Caco-2 (cell line): ENCODE measurements at regions of chr15 and their contacts with region 1.

Region 1: DNA sequence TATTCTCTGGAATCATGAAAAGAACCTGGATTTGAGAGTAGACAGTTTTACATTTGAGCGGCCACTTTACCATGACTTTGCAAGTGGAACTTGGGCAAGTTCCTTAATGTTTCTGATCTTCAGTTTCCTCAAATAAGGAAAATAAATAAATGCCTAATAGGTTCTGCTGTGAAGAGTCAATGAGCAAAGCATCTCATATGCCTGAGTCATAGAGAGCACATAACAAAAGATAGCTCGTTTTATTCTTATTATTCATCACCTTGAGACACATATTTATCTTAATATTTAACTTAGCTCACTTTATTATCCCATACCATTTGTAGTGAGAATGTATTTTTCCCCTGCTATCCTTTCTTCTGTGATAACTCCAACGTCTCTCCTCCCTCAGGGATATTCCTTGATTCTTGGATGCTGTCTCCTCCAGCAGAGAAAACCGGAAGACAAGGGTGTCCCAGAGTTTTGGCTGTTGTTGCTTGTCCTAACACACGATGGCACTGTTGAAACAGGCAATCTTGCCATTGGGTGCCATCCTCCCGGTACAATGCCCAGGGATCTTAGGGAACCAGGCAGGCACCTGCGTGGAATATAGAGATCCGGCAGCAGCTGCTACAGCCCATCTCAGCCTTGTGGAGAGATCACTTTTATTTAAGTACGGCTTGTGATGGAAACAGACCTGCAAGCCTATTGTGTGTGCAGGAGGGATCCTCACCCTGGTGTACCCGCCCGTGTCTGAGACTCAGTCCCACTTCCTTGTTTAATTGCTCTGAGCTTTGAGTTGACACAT is 33.3 kb upstream of the VPS33B start:
- DNase-seq: peak; percentile 62 to 63
- H3K4me3 ChIP-seq: no peak overlapping the region
- H3K4me3 Mint-ChIP-seq: no peak overlapping the region
- H3K27ac Mint-ChIP-seq: no peak overlapping the region
- H3K4me1 ChIP-seq: no peaks in the 10 kb centered on the region
- H3K4me1 Mint-ChIP-seq: no peaks in the 10 kb centered on the region
- H3K27me3 ChIP-seq: no peaks in the 10 kb centered on the region
- H3K27me3 Mint-ChIP-seq: peaks cover 36% of the 10 kb centered on the region
- CTCF ChIP-seq: peak; percentile 63 to 66

Region 2: DNA sequence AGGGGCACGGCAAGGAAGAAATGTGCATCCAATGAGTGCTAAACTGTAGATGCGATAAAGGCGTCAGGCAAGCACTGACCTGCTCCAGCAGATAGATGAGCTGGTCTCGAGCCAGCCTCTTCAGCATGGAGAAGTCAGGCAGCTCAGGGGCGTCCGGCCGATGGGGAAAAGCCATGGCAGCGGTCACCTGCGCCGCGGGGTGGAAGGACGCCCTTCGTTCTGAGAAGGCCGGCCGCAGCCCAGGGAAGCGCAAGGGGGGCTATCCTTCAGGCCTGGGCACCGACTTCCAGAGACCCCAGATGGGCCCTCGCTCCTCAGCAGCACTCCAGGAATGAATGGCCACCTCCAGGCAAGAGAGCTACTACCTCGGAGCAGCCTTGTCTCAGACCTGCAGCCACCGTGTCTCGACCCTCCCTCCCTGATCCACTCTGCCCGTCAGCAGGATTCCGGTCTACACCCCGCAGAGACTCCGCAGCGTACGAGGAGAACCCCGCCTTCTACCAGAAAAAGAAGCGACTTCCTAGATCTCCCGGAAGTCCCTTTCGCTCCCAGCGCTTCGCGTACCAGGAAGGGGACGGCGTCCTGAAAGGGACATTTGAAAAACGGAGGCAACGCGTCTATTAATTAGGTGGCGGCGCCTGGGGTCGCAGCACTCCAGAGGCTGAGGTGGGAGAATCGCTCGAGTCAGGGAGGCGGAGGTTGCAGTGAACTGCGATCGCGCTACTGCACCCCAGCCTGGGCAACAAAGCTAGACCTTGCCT is 33.5 kb before region 1 on chr15 and contains the start of gene VPS33B:
- CTCF ChIA-PET with region 1: no interaction called
- POLR2A ChIA-PET with region 1: no interaction called
- intact Hi-C with region 1: no loop called
- DNase-seq: peak; percentile 82 to 89
- H3K4me3 ChIP-seq: peak within 1 kb of the TSS; percentile 78
- H3K4me3 Mint-ChIP-seq: peak within 1 kb of the TSS; percentile 81
- H3K27ac Mint-ChIP-seq: peak within 1 kb of the TSS; percentile 81
- H3K4me1 ChIP-seq: peaks cover 12% of the 10 kb centered on the region; the same call in 1 of the 2 replicates
- H3K4me1 Mint-ChIP-seq: peaks cover 10% of the 10 kb centered on the region
- H3K27me3 ChIP-seq: no peaks in the 10 kb centered on the region
- H3K27me3 Mint-ChIP-seq: no peaks in the 10 kb centered on the region
- CTCF ChIP-seq: no peak
- total RNA-seq, gene VPS33B: 13.3 and 13.7 TPM in 2 replicates

Region 3: GRCh38 chr15:91224755-91225380 is 169.1 kb after region 1 on chr15:
- CTCF ChIA-PET with region 1: interaction called, 3 read pairs
- POLR2A ChIA-PET with region 1: no interaction called
- intact Hi-C with region 1: loop called (anchors 1 kb)
- DNase-seq: peak in 1 of 2 experiments; percentile 34
- H3K4me3 ChIP-seq: no peak overlapping the region
- H3K4me3 Mint-ChIP-seq: no peak overlapping the region
- H3K27ac Mint-ChIP-seq: no peak overlapping the region
- H3K4me1 ChIP-seq: no peaks in the 10 kb centered on the region
- H3K4me1 Mint-ChIP-seq: no peaks in the 10 kb centered on the region
- H3K27me3 ChIP-seq: no peaks in the 10 kb centered on the region
- H3K27me3 Mint-ChIP-seq: peaks cover 16% of the 10 kb centered on the region
- CTCF ChIP-seq: peak; percentile 46 to 63